HAP-1 (cell line): ENCODE measurements at regions of chr7 and their contacts with region 1.

Region 1: DNA sequence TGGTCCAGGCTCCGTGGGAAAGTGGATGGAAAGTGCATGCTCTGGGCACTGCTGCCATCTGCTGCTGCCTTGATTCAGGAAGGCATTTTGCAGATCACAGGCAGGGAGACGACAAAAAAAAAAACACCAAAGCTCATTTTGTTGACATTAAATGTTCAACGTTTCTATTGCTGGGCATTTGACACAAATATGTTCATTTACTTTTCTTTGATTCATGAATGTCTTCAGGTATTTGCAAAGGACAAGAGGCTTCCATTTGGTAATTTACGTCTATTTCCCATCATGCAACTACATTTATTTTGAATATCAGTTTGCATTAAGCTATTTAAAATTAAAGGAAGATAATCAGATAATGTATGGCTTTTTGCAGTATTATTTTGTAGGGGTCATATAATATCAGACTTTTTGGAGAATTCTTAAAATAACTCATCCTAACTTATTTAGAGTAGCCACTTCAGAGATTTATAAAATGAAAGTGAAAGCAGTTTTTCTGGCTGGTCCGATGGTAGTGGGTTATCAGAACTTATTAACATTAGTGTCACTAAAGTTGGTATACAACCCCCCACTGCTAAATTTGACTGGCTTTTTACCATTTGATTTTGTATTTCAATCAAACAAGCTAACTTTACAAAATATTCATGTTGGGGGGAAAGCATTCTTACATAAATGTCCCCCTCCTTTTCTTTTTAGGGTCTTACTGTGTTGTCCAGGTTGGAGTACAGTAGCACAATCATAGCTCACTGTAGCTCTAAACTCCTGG is 65.3 kb downstream of the PDIA4 start:
- DNase-seq: peak; percentile 58 to 60
- H3K4me3 ChIP-seq: peak overlapping the region; percentile 38
- H3K4me1 ChIP-seq: peaks cover 5% of the 10 kb centered on the region
- H3K27me3 ChIP-seq: no peaks in the 10 kb centered on the region

Region 2: DNA sequence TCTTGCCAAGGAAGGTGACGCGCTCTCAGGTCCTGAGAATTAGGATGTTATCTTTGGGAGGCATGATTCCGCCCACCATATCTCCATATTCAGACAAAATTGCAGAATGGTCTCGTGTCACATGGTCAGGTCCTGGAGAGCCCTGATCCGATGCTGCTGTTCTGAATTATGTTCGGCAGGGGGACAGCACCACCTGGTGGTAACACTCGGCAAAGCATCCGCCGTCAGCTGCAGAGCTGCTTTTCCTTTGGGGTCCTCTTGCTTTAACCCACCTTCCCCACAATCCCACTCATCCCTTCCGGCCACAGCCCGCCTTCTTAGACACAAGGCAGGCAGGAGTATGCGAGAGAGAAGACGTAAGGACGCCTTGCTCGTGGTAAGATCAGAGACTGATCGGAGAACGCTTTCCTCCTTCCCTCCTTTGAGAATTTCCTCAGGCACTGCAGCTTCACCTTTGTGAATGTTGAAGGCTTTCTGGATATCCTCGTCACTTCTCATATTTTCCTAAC is 700.2 kb before region 1 on chr7:
- in situ Hi-C with region 1: loop called (anchors 25 kb)
- DNase-seq: peak; percentile 52 to 84
- H3K4me3 ChIP-seq: no peak overlapping the region
- H3K4me1 ChIP-seq: no peaks in the 10 kb centered on the region
- H3K27me3 ChIP-seq: no peaks in the 10 kb centered on the region

Region 3: DNA sequence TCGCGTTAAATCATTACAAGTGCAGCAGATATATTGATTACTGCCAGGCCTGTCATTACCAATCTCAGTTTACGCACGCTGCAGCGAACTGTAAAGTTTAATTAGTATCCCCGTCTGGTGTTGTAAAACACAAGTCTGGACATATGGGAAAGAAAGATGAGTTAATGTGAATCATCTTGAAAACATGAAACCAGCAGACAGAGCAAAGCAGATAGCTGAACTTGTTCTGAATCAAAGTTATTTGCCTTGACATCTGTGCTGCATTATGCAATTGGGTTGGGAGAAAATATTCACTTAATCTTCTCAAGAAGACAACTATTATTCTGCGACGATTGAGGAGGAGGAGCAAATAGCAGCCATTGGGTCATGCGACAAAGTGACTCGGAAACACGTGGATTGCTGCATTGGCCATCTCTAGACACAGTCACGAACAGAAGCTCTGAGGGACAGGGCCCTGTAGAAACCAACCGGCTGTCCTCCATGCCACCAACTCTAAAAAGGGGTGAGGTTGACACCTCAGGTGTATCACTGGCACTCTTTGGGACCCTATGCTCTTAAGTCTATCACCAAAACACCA is 528.7 kb before region 1 on chr7:
- in situ Hi-C with region 1: no loop called
- DNase-seq: no peak
- H3K4me3 ChIP-seq: no peak overlapping the region
- H3K4me1 ChIP-seq: no peaks in the 10 kb centered on the region
- H3K27me3 ChIP-seq: no peaks in the 10 kb centered on the region

Region 4: DNA sequence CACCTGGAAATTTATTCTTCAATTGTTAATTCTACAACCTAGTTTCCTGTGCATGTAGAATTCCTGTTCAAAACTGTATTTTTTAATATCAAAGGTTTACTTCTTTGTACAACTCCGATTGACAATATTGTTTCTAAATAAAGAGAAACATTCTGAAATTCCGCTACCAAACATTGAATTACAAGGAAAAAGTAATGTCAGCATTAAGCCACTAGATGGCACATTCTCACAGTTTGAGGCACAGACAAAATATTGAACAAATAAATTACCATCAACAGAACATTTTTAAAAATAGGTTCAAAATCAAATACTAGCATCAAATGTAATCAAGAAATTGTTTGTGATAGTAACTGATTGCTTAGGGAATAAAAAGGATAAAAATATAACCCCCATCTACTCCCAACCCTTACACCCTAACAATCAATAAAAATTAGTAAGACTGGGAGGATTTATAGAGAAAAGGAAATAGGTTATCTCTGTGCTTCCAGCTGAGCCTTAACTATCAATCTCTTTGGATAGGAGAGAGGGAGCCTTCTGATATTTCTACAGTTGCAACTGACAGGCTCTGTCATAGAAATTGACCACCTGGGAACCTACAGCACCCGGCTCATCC is 459.0 kb before region 1 on chr7:
- in situ Hi-C with region 1: loop called (anchors 25 kb)
- DNase-seq: peak in 1 of 2 experiments; percentile 23
- H3K4me3 ChIP-seq: no peak overlapping the region
- H3K4me1 ChIP-seq: peaks cover 4% of the 10 kb centered on the region; the same call in 1 of the 2 replicates
- H3K27me3 ChIP-seq: no peaks in the 10 kb centered on the region